ENCODE measurements at regions of chr3 and their contacts with region 1.

Region 1: GRCh38 chr3:177345049-177345972 is 148.0 kb upstream of the TBL1XR1 start:
- DNase-seq: peak; percentile 86 to 94
- ATAC-seq: peak; percentile 97 to 99 (median 97)
- H3K4me3 ChIP-seq: peak overlapping the region; percentile 46
- H3K27ac ChIP-seq: peak overlapping the region; percentile 95
- H3K4me1 ChIP-seq: peaks cover 25% of the 10 kb centered on the region
- H3K27me3 ChIP-seq: no peaks in the 10 kb centered on the region
- CTCF ChIP-seq: no peak

Region 2: DNA sequence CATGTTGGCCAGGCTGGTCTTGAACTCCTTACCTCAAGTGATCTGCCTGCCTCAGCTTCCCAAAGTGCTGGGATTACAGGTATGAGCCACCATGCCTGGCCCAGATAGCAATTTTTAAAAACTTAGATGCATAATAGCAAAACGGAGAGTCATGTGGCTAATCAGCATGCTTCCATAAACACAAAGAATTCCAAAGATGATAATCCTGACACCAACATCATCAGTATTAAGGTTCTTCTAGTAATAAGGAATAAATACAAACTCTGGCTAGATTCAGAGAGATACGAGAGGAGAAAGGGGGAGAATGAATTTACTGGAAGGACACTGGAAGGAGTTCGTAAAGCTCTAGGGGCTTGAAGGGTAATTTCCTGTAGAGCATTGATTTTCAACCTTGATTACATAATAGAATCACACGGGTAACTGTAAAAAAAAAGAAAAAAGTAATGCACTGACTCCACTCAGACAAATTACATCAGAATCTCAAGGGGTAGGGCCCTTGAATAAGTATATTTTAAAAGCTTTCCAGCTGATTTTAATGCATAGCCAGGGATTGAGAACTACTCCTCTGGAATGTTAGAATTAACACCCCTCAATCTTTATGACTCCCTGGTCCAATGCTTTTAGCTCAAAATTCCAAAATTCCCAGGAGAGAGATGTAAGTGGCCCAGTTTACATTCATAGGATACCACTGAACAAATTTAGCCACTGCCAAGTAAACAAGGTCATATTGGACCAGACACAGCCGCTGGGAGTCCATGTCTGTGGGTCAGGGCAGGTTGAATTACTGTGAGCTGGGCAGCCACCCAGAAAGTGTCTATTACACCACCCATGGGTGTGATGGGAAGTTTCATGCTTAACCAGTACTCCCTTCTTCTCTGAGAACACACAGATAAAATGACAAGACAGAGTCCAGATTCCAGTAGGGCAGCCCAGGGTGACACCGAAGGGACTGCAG is 391.9 kb before region 1 on chr3:
- intact Hi-C with region 1: loop called in 1 of 2 experiments (anchors 10 kb)
- DNase-seq: peak; percentile 64 to 87
- ATAC-seq: peak; percentile 72 to 80 (median 76)
- H3K4me3 ChIP-seq: no peak overlapping the region
- H3K27ac ChIP-seq: peak overlapping the region; percentile 67
- H3K4me1 ChIP-seq: peaks cover 42% of the 10 kb centered on the region
- H3K27me3 ChIP-seq: no peaks in the 10 kb centered on the region
- CTCF ChIP-seq: no peak